ENCODE measurements at regions of chr1 and their contacts with region 1.

Region 1: GRCh38 chr1:171984850-171985485 is 143.7 kb downstream of the DNM3 start:
- DNase-seq: peak in 7 of 9 donors; percentile 15 to 53 (median 39)
- ATAC-seq: peak; percentile 50
- H3K4me3 ChIP-seq: no peak overlapping the region
- H3K4me3 Mint-ChIP-seq: no peak overlapping the region
- H3K27ac ChIP-seq: no peak overlapping the region
- H3K27ac Mint-ChIP-seq: no peak overlapping the region
- H3K4me1 ChIP-seq: no peaks in the 10 kb centered on the region
- H3K4me1 Mint-ChIP-seq: peaks cover 0 to 3% (median 0%) of the 10 kb centered on the region in 7 donors
- H3K27me3 ChIP-seq: no peaks in the 10 kb centered on the region
- H3K27me3 Mint-ChIP-seq: peaks cover 0 to 17% (median 0%) of the 10 kb centered on the region in 5 donors

Region 2: GRCh38 chr1:171644805-171645483 is 340.0 kb before region 1 on chr1:
- CTCF ChIA-PET with region 1: interaction called, 21 read pairs
- POLR2A ChIA-PET with region 1: no interaction called
- intact Hi-C with region 1: loop called (anchors 1 kb)
- DNase-seq: peak; percentile 19 to 73 (median 62)
- ATAC-seq: peak; percentile 90
- H3K4me3 ChIP-seq: no peak overlapping the region
- H3K4me3 Mint-ChIP-seq: peak overlapping the region in 4 of 10 donors; percentile 2 to 27 (median 14)
- H3K27ac ChIP-seq: no peak overlapping the region
- H3K27ac Mint-ChIP-seq: peak overlapping the region in 3 of 9 donors; percentile 42 to 82 (median 77)
- H3K4me1 ChIP-seq: peaks cover 0 to 4% of the 10 kb centered on the region in 2 donors
- H3K4me1 Mint-ChIP-seq: peaks cover 4 to 12% (median 6%) of the 10 kb centered on the region in 7 donors
- H3K27me3 ChIP-seq: no peaks in the 10 kb centered on the region
- H3K27me3 Mint-ChIP-seq: peaks cover 0 to 9% (median 0%) of the 10 kb centered on the region in 5 donors

Region 3: GRCh38 chr1:171654942-171655745 is 329.8 kb before region 1 on chr1:
- CTCF ChIA-PET with region 1: interaction called, 3 read pairs
- POLR2A ChIA-PET with region 1: no interaction called
- intact Hi-C with region 1: loop called in 1 of 2 experiments (anchors 2 kb)
- DNase-seq: peak; percentile 24 to 76 (median 38)
- ATAC-seq: peak; percentile 78
- H3K4me3 ChIP-seq: peak overlapping the region; percentile 39
- H3K4me3 Mint-ChIP-seq: peak overlapping the region in 8 of 10 donors; percentile 3 to 72 (median 52)
- H3K27ac ChIP-seq: no peak overlapping the region
- H3K27ac Mint-ChIP-seq: peak overlapping the region in 1 of 9 donors; percentile 33
- H3K4me1 ChIP-seq: peaks cover 3 to 5% of the 10 kb centered on the region in 2 donors
- H3K4me1 Mint-ChIP-seq: peaks cover 9 to 12% (median 10%) of the 10 kb centered on the region in 7 donors
- H3K27me3 ChIP-seq: no peaks in the 10 kb centered on the region
- H3K27me3 Mint-ChIP-seq: peaks cover 0 to 34% (median 11%) of the 10 kb centered on the region in 5 donors

Region 4: DNA sequence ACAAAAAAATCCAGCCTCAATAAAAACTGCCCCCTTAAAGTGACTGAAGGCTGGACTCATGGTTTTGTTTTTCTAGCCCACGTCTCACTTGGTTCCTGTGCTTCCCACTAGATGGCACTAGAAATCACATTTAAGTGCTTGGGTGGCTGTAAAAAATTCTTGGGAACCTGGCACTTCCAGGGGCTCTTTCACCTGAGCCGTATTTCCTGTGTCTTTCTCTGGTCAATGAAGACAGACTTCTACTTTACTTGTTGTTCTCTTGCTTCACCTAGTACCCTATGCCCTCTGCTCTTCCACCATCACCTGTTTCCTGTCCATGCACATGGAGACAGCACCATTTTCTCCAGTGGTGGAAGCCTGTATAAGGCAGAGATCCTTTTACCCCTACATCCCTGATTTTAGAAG is 183.5 kb before region 1 on chr1:
- CTCF ChIA-PET with region 1: interaction called, 45 read pairs
- POLR2A ChIA-PET with region 1: no interaction called
- intact Hi-C with region 1: loop called (anchors 1 kb)
- DNase-seq: peak in 3 of 9 donors; percentile 12 to 17 (median 13)
- ATAC-seq: no peak
- H3K4me3 ChIP-seq: no peak overlapping the region
- H3K4me3 Mint-ChIP-seq: no peak overlapping the region
- H3K27ac ChIP-seq: no peak overlapping the region
- H3K27ac Mint-ChIP-seq: peak overlapping the region in 5 of 9 donors; percentile 25 to 80 (median 40)
- H3K4me1 ChIP-seq: peaks cover 0 to 3% of the 10 kb centered on the region in 2 donors
- H3K4me1 Mint-ChIP-seq: peaks cover 0 to 13% (median 8%) of the 10 kb centered on the region in 7 donors
- H3K27me3 ChIP-seq: no peaks in the 10 kb centered on the region
- H3K27me3 Mint-ChIP-seq: no peaks in the 10 kb centered on the region

Region 5: GRCh38 chr1:171828794-171829193 is 156.2 kb before region 1 on chr1:
- CTCF ChIA-PET with region 1: no interaction called
- POLR2A ChIA-PET with region 1: no interaction called
- intact Hi-C with region 1: loop called in 1 of 2 experiments (anchors 1 kb)
- DNase-seq: no peak
- ATAC-seq: no peak
- H3K4me3 ChIP-seq: no peak overlapping the region
- H3K4me3 Mint-ChIP-seq: no peak overlapping the region
- H3K27ac ChIP-seq: no peak overlapping the region
- H3K27ac Mint-ChIP-seq: no peak overlapping the region
- H3K4me1 ChIP-seq: no peaks in the 10 kb centered on the region
- H3K4me1 Mint-ChIP-seq: no peaks in the 10 kb centered on the region
- H3K27me3 ChIP-seq: no peaks in the 10 kb centered on the region
- H3K27me3 Mint-ChIP-seq: no peaks in the 10 kb centered on the region

Region 6: GRCh38 chr1:171961861-171962260 is 23.1 kb before region 1 on chr1:
- CTCF ChIA-PET with region 1: no interaction called
- POLR2A ChIA-PET with region 1: no interaction called
- intact Hi-C with region 1: no loop called
- DNase-seq: no peak
- ATAC-seq: no peak
- H3K4me3 ChIP-seq: no peak overlapping the region
- H3K4me3 Mint-ChIP-seq: no peak overlapping the region
- H3K27ac ChIP-seq: no peak overlapping the region
- H3K27ac Mint-ChIP-seq: no peak overlapping the region
- H3K4me1 ChIP-seq: no peaks in the 10 kb centered on the region
- H3K4me1 Mint-ChIP-seq: peaks cover 0 to 6% (median 0%) of the 10 kb centered on the region in 7 donors
- H3K27me3 ChIP-seq: no peaks in the 10 kb centered on the region
- H3K27me3 Mint-ChIP-seq: peaks cover 0 to 2% (median 0%) of the 10 kb centered on the region in 5 donors